K562 (cell line): ENCODE measurements at regions of chr7 and their contacts with region 1.

Region 1: GRCh38 chr7:7002416-7003062 is 176.5 kb upstream of the CCZ1B start:
- DNase-seq: no peak
- ATAC-seq: no peak
- H3K4me3 ChIP-seq: no peak overlapping the region
- H3K27ac ChIP-seq: no peak overlapping the region
- H3K4me1 ChIP-seq: no peaks in the 10 kb centered on the region; a peak in 2 of 5 replicates
- H3K27me3 ChIP-seq: no peaks in the 10 kb centered on the region
- CTCF ChIP-seq: no peak
- EP300 ChIP-seq: no peak
- POLR2A ChIP-seq: no peak
- RAD21 ChIP-seq: no peak

Region 2: DNA sequence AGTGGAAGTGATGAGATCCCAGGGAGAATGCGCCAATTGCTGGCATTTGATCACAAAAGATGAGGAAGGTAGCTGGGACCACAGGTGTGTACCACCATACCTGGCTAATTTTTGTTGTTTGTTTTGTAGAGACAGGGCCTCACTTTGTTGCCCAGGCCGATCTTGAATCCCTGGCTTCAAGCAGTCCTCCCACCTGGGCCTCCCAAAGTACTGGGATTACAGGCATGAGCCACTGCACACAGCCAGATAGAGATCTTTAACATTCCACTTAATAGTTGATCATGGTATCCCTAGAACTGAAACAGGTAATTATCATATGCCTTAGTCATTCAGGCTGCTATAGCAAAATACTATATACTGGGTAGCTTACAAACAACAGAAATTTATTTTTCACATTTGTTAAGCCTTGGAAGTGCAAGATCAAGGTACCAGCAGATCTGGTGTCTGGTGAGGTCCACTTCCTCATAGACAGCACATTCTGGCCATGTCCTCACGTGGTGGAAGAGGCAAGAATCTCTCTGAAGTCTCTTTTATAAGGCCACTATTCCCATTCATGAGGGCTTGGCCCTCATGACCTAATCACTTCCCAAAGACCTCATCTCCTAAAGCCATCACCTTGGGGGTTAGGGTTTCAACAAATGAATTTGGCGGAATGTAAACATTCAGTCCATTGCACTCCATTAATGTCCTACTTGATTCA is 42.1 kb after region 1 on chr7:
- CTCF ChIA-PET with region 1: no interaction called
- POLR2A ChIA-PET with region 1: no interaction called
- in situ Hi-C with region 1: no loop called
- intact Hi-C with region 1: loop called (anchors 10 kb)
- DNase-seq: no peak
- ATAC-seq: no peak
- H3K4me3 ChIP-seq: no peak overlapping the region
- H3K27ac ChIP-seq: no peak overlapping the region
- H3K4me1 ChIP-seq: peaks cover 6 to 21% of the 10 kb centered on the region in 2 experiments; a peak in 3 of 5 replicates
- H3K27me3 ChIP-seq: no peaks in the 10 kb centered on the region
- CTCF ChIP-seq: no peak
- EP300 ChIP-seq: no peak
- POLR2A ChIP-seq: no peak
- RAD21 ChIP-seq: no peak

Region 3: GRCh38 chr7:7182156-7183060 is 179.9 kb after region 1 on chr7 and contains the start of gene C1GALT1:
- CTCF ChIA-PET with region 1: no interaction called
- POLR2A ChIA-PET with region 1: interaction called, 3 read pairs
- in situ Hi-C with region 1: no loop called
- intact Hi-C with region 1: loop called (anchors 10 kb)
- DNase-seq: peak; percentile 96 to 98 (median 96)
- ATAC-seq: peak; percentile 92
- H3K4me3 ChIP-seq: peak within 1 kb of the TSS; percentile 87
- H3K27ac ChIP-seq: peak within 1 kb of the TSS; percentile 95
- H3K4me1 ChIP-seq: peaks cover 7 to 11% of the 10 kb centered on the region in 2 experiments; a peak in 3 of 5 replicates
- H3K27me3 ChIP-seq: no peaks in the 10 kb centered on the region
- CTCF ChIP-seq: peak; percentile 32 to 64 (median 43)
- EP300 ChIP-seq: no peak
- POLR2A ChIP-seq: peak; percentile 94
- RAD21 ChIP-seq: peak; percentile 29 to 41; a peak in 3 of 4 replicates
- polyA plus RNA-seq, gene C1GALT1: 5.0 to 6.4 TPM